ENCODE measurements at regions of chr4 and their contacts with region 1.

Region 1: DNA sequence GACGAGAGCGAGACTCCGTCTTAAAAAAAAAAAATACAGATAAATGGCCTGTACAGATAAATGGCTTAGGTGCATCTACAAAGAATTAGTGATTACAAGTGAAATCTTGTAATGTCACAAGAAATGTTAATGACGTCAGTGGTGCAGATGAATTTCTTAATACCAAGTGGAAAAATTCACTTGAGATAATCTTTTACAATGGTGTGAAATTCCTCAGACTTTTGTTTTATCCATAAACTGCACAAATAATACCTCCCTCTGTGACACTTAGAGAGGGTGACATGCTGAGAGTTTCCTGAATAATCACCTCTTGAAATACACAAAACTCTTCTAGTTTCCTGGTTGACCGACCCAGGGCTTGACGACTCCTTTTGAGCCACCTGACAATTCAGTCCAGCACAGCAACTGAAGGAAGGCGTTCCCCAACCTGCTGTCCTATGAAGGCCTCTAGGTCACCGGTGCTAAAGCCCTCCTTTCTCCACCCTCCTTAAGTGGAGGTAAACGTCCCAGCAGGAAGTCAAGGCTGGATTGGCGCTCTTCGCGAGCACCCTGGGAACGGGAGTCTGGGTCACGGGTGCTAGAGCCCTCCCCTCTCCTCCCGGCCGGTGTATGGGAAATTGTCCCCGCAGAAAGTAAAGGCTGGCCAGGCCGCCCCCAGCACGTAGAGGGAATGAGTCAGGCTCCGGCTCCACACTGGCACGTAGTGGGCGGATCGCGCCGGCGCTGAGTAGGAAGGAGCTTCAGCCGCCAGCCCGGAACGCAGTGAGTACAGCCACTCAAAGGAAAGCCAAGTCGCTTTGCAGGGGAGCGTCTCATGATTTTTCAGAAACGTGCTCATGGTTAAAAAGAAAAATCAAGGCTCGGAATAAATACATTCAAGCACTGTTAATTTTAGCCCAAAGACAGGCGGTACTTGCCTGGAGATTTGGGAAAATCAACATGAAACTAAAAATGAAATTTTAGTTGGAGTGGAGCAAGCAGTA is at the start of gene TMEM144:
- DNase-seq: peak; percentile 66
- H3K4me3 Mint-ChIP-seq: peak within 1 kb of the TSS; percentile 70
- H3K27ac Mint-ChIP-seq: no peak within 1 kb of the TSS
- H3K4me1 Mint-ChIP-seq: peaks cover 21% of the 10 kb centered on the region
- H3K27me3 Mint-ChIP-seq: peaks cover 26% of the 10 kb centered on the region
- total RNA-seq, gene TMEM144: 0.31 TPM in 1 of 2 experiments, not detected in the other

Region 2: GRCh38 chr4:157961229-157961990 is 248.7 kb before region 1 on chr4:
- CTCF ChIA-PET with region 1: no interaction called
- intact Hi-C with region 1: no loop called
- DNase-seq: no peak
- H3K4me3 Mint-ChIP-seq: no peak overlapping the region
- H3K27ac Mint-ChIP-seq: no peak overlapping the region
- H3K4me1 Mint-ChIP-seq: no peaks in the 10 kb centered on the region
- H3K27me3 Mint-ChIP-seq: peaks cover 6% of the 10 kb centered on the region

Region 3: DNA sequence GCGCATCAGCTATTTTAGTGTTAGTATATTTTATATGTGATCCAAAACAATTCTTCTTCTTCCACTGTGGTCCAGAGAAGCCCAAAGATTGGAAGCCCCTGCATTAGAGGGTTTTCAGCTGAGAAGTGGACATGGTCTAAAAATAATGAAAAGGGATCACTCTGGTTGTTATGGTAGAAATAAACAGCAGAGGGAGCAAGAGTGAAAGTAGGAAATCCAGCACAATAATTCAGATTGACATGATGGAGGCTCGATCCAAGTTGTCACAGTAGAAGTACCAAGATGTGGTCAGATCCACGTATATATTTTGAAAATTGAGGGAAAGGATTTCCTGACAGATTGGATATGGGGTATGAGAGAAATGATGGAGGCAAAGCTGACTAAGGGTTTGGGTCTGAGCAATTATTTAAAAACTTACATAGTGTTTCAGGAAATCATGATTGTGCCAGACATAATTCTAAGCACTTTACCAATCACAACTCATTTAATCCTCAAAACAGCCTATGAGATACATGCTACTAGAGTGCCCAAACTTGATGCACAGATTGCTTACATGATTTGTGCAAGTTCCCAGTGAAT is 16.9 kb before region 1 on chr4:
- CTCF ChIA-PET with region 1: interaction called, 3 read pairs
- intact Hi-C with region 1: loop called (anchors 1 kb)
- DNase-seq: no peak
- H3K4me3 Mint-ChIP-seq: no peak overlapping the region
- H3K27ac Mint-ChIP-seq: no peak overlapping the region
- H3K4me1 Mint-ChIP-seq: no peaks in the 10 kb centered on the region
- H3K27me3 Mint-ChIP-seq: peaks cover 10% of the 10 kb centered on the region